ENCODE measurements at regions of chr2 and their contacts with region 1.

Region 1: DNA sequence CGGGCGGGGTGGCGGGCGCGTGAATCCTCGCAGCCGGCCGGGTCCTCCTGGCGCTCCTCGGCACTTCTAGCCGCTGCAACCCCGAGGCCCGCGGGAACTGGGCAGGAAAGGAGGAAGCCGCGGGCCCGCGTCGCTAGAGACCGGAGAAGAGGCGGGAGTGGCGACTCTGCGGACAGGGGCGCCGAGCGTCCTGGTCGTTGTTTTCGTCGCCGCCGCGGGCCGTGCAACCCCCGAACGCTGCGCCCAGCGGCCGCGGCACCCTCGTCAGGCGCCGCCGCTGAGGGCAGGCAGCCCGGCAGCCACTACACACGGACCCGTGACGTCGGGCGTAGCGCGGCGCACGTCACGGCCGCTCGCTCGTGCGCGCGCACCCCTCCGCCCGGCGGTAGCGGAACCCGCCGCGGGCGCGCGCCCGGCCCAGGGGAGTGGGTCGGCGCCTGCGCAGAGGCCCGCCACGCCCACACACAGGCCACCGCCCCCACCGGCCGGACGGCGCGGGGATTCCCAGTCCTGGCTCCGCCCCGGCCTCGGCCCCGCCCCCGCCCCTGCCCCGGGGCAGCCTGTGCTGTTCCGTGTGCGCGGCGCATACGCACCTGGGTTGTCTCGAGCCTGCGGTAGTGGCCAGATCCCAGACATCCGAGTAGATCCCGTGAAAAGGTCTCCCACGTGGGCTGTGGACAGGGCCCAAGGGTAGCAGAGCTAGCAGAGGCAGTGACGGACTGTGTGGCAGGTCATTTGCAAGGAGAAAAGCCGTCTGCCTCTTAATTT is at the start of gene MAP3K2:
- DNase-seq: peak; percentile 91
- H3K4me3 ChIP-seq: peak within 1 kb of the TSS; percentile 69 to 77 (median 75)
- H3K27ac ChIP-seq: peak within 1 kb of the TSS; percentile 94
- H3K4me1 ChIP-seq: peaks cover 24% of the 10 kb centered on the region
- H3K27me3 ChIP-seq: no peaks in the 10 kb centered on the region
- CTCF ChIP-seq: no peak
- POLR2A ChIP-seq: peak; percentile 83
- total RNA-seq, gene MAP3K2: 20.5 and 25.7 TPM in 2 replicates

Region 2: DNA sequence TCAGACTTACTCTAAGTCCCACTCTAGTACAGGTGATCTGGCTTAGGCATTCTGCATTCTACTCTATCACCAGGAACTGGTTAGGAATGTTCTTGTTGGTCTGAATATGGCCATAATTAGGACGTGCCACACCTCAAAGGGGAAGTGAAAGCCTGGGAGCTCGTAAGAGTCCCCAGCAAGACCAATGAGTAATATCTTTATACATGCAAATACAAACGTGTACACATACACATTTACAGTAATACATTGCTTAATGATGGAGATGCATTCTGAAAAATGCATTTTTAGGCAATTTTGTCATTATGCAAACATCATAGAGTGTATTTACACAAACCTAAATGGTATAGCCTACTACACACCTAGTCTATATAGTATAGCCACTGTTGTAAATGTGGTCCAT is 74.4 kb before region 1 on chr2:
- CTCF ChIA-PET with region 1: no interaction called
- POLR2A ChIA-PET with region 1: no interaction called
- dilution Hi-C with region 1: no loop called
- intact Hi-C with region 1: no loop called
- DNase-seq: no peak
- H3K4me3 ChIP-seq: no peak overlapping the region
- H3K27ac ChIP-seq: no peak overlapping the region
- H3K4me1 ChIP-seq: no peaks in the 10 kb centered on the region
- H3K27me3 ChIP-seq: no peaks in the 10 kb centered on the region
- CTCF ChIP-seq: no peak
- POLR2A ChIP-seq: no peak

Region 3: GRCh38 chr2:127398239-127398590 is 10.4 kb after region 1 on chr2:
- CTCF ChIA-PET with region 1: interaction called, 4 read pairs
- POLR2A ChIA-PET with region 1: interaction called, 4 read pairs
- dilution Hi-C with region 1: no loop called
- intact Hi-C with region 1: loop called (anchors 1 kb)
- DNase-seq: peak; percentile 91
- H3K4me3 ChIP-seq: no peak overlapping the region
- H3K27ac ChIP-seq: no peak overlapping the region
- H3K4me1 ChIP-seq: peaks cover 13% of the 10 kb centered on the region
- H3K27me3 ChIP-seq: no peaks in the 10 kb centered on the region
- CTCF ChIP-seq: no peak
- POLR2A ChIP-seq: no peak

Region 4: GRCh38 chr2:127408004-127408806 is 20.4 kb after region 1 on chr2:
- CTCF ChIA-PET with region 1: interaction called, 4 read pairs
- POLR2A ChIA-PET with region 1: no interaction called
- dilution Hi-C with region 1: no loop called
- intact Hi-C with region 1: loop called (anchors 1 kb)
- DNase-seq: peak; percentile 92
- H3K4me3 ChIP-seq: peak overlapping the region in 2 of 3 experiments; percentile 27 to 34
- H3K27ac ChIP-seq: peak overlapping the region; percentile 95
- H3K4me1 ChIP-seq: peaks cover 40% of the 10 kb centered on the region
- H3K27me3 ChIP-seq: no peaks in the 10 kb centered on the region
- CTCF ChIP-seq: no peak
- POLR2A ChIP-seq: no peak

Region 5: DNA sequence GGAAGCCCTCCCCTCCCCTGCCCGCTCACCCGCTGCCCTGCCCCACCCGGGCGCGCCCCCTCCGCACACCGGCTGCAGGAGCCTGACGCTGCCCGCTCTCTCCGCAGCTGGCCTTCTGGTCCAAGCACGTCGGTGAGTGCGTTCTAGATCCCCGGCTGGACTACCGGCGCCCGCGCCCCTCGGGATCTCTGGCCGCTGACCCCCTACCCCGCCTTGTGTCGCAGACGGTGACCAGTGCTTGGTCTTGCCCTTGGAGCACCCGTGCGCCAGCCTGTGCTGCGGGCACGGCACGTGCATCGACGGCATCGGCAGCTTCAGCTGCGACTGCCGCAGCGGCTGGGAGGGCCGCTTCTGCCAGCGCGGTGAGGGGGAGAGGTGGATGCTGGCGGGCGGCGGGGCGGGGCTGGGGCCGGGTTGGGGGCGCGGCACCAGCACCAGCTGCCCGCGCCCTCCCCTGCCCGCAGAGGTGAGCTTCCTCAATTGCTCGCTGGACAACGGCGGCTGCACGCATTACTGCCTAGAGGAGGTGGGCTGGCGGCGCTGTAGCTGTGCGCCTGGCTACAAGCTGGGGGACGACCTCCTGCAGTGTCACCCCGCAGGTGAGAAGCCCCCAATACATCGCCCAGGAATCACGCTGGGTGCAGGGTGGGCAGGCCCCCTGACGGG is 35.1 kb after region 1 on chr2:
- CTCF ChIA-PET with region 1: no interaction called
- POLR2A ChIA-PET with region 1: no interaction called
- dilution Hi-C with region 1: no loop called
- intact Hi-C with region 1: loop called (anchors 5 kb)
- DNase-seq: peak; percentile 11
- H3K4me3 ChIP-seq: peak overlapping the region in 2 of 3 experiments; percentile 2 to 43
- H3K27ac ChIP-seq: no peak overlapping the region
- H3K4me1 ChIP-seq: peaks cover 4% of the 10 kb centered on the region
- H3K27me3 ChIP-seq: peaks cover 10 to 20% of the 10 kb centered on the region in 2 experiments
- CTCF ChIP-seq: no peak
- POLR2A ChIP-seq: no peak